Stomach (tissue), 19 donors: ENCODE measurements at regions of chr16 and their contacts with region 1.

Region 1: DNA sequence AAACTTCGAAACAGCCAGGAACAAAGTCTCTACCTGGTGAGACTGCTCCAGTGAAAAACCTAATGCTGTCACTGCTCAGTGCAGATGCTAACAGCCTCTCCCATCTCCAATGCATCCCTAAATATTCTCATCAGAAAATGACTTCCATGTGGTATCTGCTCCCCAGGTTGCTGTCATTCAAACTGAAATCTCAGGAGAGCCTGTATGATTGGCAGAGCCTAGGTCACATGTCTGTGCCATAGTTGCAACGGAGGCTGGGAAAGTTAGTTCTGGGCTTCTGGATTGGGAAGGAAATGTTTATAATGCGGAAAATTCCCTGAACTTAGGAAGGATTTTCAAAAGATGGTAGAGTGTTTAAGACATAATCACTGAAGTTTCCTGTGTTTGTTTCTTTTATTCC is 206.4 kb upstream of the ZKSCAN2 start:
- DNase-seq: no peak
- H3K4me3 ChIP-seq: no peak overlapping the region
- H3K27ac ChIP-seq: no peak overlapping the region
- H3K4me1 ChIP-seq: no peaks in the 10 kb centered on the region
- H3K27me3 ChIP-seq: no peaks in the 10 kb centered on the region
- CTCF ChIP-seq: no peak
- EP300 ChIP-seq: no peak
- POLR2A ChIP-seq: no peak

Region 2: GRCh38 chr16:25413985-25414384 is 50.1 kb before region 1 on chr16:
- intact Hi-C with region 1: loop called (anchors 10 kb)
- DNase-seq: no peak
- H3K4me3 ChIP-seq: no peak overlapping the region
- H3K27ac ChIP-seq: no peak overlapping the region
- H3K4me1 ChIP-seq: no peaks in the 10 kb centered on the region
- H3K27me3 ChIP-seq: no peaks in the 10 kb centered on the region
- CTCF ChIP-seq: no peak
- EP300 ChIP-seq: no peak
- POLR2A ChIP-seq: no peak